Posterior cingulate gyrus (tissue), 11 donors: ENCODE measurements at regions of chr12 and their contacts with region 1.

Region 1: GRCh38 chr12:95072900-95073697 is at the start of gene NR2C1:
- DNase-seq: peak; percentile 88 to 99 (median 91)

Region 2: GRCh38 chr12:95003213-95003920 is 69.7 kb before region 1 on chr12 and contains the start of gene NDUFA12:
- intact Hi-C with region 1: no loop called
- DNase-seq: peak; percentile 92 to 99 (median 96)

Region 3: DNA sequence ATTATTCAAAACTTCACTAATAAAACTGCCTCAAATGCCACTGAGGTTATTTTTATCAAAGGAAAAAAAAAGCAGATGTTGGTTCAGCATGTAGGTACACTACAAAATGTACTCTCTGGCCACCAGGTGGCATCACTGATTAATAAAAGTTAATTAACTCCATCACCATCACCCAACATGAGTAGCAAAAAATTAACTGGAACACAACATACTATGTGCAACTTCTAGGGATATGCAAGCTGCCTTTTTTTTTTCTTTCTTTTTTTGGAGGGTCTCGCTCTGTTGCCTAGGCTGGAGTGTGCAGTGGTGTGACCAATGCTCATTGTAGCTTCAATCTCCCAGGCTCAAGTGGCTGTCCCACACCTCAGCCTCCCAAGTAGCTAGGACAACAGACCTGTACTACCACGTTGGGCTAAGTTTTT is 44.1 kb after region 1 on chr12:
- intact Hi-C with region 1: no loop called
- DNase-seq: peak in 5 of 10 donors; percentile 26 to 52 (median 32)

Region 4: GRCh38 chr12:95473884-95474659 is 401.0 kb after region 1 on chr12 and contains the start of gene METAP2:
- intact Hi-C with region 1: loop called (anchors 1 kb)
- DNase-seq: peak; percentile 94 to 99 (median 97)

Region 5: GRCh38 chr12:95497031-95497430 is 423.9 kb after region 1 on chr12:
- intact Hi-C with region 1: no loop called
- DNase-seq: no peak